ENCODE measurements at regions of chr2 and their contacts with region 1.

Region 1: GRCh38 chr2:231557571-231558237 is 27.5 kb upstream of the NMUR1 start:
- DNase-seq: peak; percentile 94
- H3K4me3 ChIP-seq: no peak overlapping the region
- H3K27ac ChIP-seq: peak overlapping the region; percentile 23 to 65 (median 55)
- H3K4me1 ChIP-seq: peaks cover 16 to 24% (median 21%) of the 10 kb centered on the region in 4 donors
- H3K27me3 ChIP-seq: no peaks in the 10 kb centered on the region
- CTCF ChIP-seq: peak; percentile 55 to 81 (median 63)
- EP300 ChIP-seq: no peak
- POLR2A ChIP-seq: no peak

Region 2: GRCh38 chr2:231482806-231483391 is 74.8 kb before region 1 on chr2:
- intact Hi-C with region 1: loop called (anchors 2 kb)
- DNase-seq: peak; percentile 94
- H3K4me3 ChIP-seq: peak overlapping the region; percentile 49 to 58 (median 53)
- H3K27ac ChIP-seq: peak overlapping the region; percentile 68 to 78 (median 72)
- H3K4me1 ChIP-seq: peaks cover 0 to 23% (median 18%) of the 10 kb centered on the region in 4 donors
- H3K27me3 ChIP-seq: no peaks in the 10 kb centered on the region
- CTCF ChIP-seq: peak in 2 of 3 experiments; percentile 77 to 79
- EP300 ChIP-seq: no peak
- POLR2A ChIP-seq: no peak

Region 3: GRCh38 chr2:231514951-231515297 is 42.8 kb before region 1 on chr2:
- intact Hi-C with region 1: loop called (anchors 5 kb)
- DNase-seq: no peak
- H3K4me3 ChIP-seq: peak overlapping the region; percentile 67 to 85 (median 74)
- H3K27ac ChIP-seq: peak overlapping the region; percentile 85 to 90 (median 88)
- H3K4me1 ChIP-seq: peaks cover 5 to 14% (median 9%) of the 10 kb centered on the region in 4 donors
- H3K27me3 ChIP-seq: no peaks in the 10 kb centered on the region
- CTCF ChIP-seq: no peak
- EP300 ChIP-seq: no peak
- POLR2A ChIP-seq: no peak

Region 4: DNA sequence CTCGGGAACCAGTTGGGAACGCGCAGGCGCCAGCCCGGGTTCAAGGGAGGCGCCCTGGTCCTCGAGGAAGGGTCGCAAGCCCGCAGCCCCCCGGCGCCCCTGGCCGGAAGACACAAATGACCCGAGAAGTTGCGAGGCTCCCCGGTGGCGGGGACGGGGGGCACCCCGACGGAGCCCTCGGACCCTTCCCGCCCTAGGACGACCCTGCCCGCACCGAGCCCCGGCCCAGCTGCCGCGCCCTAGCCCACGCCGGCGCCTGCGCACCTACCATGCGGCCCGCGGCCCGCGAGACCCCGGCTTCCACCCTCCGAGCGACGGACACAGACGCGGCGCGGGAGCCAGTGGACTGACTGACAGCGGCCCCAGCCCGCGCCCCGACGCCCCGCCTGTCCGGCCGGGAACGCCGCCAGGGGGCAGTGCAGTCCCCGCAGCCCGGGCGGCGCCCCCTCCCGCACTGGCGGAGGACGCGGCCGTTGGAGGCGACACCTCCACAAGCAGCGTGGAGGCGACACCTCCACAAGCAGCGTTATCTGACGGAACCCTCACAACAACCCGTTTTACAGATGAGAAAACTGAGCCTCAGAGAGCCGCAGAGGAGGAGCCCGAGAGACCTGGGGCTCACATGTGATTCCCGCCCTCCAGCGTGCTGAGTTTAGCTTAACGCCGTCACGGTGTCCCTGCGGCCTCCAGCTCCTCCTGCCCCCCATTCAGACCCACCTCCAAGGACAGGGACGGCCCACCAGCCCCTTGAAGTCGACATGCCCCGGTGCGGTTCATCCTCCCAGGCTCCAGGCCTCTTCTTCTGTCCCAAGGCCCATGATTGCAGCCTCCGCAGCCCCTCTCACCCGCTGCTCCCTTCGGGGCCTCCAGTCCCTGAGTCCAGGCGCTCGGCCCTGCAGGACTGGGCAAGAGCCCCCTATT is 27.4 kb before region 1 on chr2 and contains the start of gene NMUR1:
- intact Hi-C with region 1: loop called (anchors 1 kb)
- DNase-seq: no peak
- H3K4me3 ChIP-seq: peak within 1 kb of the TSS; percentile 56 to 69 (median 63)
- H3K27ac ChIP-seq: peak within 1 kb of the TSS; percentile 47 to 50 (median 48)
- H3K4me1 ChIP-seq: peaks cover 5 to 13% (median 12%) of the 10 kb centered on the region in 4 donors
- H3K27me3 ChIP-seq: peaks cover 0 to 6% (median 1%) of the 10 kb centered on the region in 4 donors
- CTCF ChIP-seq: peak; percentile 76 to 90 (median 82)
- EP300 ChIP-seq: no peak
- POLR2A ChIP-seq: no peak
- total RNA-seq, gene NMUR1: 1.2 to 5.4 (median 2.5) TPM

Region 5: DNA sequence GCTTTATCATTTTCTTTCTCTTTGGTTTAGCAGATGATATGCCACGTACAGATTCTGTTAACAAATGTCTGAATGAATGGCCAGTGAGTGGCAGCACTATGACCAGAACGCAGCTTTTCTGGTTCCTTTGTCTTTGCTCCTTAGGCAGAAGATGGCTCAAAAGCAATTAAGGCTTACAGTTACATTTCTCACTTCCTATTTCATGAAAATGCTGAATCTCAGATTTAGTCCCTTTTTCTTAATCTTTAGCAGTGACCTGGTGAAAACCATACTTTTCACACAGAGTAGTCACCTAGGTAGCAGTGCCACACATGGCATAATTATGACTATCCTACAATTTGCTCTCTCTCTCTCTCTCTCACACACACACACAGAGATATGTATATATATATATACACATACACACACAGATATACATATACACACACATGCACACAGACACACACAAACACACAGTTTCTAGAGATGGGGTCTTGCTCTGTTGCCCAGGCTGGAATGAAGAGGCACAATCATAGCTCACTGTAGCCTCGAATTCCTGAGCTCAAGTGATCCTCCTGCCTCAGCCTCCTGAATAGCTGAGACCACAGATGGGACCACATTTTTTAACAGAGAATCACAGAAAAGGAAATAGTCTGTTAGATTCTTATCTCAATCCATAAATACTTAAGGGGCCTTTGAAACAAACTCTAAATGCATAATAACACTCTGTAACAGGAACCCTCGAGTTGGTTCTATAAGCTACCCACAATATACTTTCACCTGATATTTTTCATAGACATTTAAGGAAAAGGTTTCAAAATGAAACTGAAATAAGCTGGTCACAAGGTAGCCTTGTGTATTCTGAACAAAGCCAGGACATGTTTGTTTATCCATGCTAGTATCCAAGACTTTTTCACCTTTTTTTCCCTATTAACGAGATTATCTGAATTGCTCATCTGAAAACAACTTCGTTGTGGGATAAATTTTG is 211.7 kb after region 1 on chr2:
- intact Hi-C with region 1: no loop called
- DNase-seq: no peak
- H3K4me3 ChIP-seq: no peak overlapping the region
- H3K27ac ChIP-seq: no peak overlapping the region
- H3K4me1 ChIP-seq: peaks cover 0 to 5% (median 0%) of the 10 kb centered on the region in 4 donors
- H3K27me3 ChIP-seq: no peaks in the 10 kb centered on the region
- CTCF ChIP-seq: no peak
- EP300 ChIP-seq: no peak
- POLR2A ChIP-seq: no peak